MCF 10A (cell line): ENCODE measurements at regions of chr17 and their contacts with region 1.

Region 1: DNA sequence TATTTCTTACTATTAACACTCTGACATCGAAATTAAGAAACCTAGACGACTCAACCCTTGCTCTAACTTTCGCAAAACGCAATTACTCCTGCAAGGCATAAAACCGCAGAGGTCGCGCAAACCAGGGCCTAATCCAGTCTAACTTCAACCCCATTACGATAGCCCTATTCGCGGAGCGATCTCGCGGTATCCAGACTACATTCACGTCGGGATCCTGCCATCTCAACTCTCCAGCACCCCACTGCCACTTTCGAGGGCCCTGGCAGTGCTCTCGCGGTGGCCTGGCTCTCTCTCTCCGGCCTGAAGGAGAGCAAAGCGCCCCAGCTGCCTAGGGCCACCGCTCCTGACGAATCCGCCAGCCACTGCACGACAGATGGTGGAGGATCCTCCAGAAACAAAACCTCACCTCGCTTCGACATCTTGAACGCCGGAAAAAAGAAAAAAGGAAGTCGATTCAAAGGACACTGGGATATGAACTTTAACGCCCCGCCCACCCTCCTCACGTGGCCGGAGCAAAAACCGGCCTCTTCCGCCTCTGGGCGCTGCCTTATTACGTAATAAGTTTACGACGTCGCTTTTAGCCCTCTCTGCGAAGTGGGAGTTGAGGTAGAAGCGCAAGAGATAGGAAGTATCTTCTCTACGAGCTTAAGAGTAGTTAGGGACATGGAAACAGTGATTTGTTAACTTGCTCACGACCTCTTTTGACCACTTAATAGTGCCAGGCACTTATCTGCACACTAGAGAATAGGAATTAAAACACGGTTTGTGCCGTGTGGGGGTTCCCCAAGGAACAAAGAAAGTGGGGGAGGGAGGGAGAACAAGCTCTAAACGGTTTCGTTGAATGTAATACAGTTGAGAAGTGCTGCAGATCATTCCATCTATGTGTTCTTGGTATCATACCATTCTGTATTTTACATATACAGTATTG is at the start of gene RPL23:
- DNase-seq: peak; percentile 97
- H3K4me3 Mint-ChIP-seq: peak within 1 kb of the TSS; percentile 99
- H3K27ac Mint-ChIP-seq: peak within 1 kb of the TSS; percentile 100
- H3K4me1 Mint-ChIP-seq: peaks cover 15% of the 10 kb centered on the region
- H3K27me3 Mint-ChIP-seq: no peaks in the 10 kb centered on the region
- CTCF ChIP-seq: no peak
- total RNA-seq, gene RPL23: 1,891 and 2,060 TPM in 2 replicates

Region 2: GRCh38 chr17:38752119-38752929 is 101.2 kb before region 1 on chr17 and contains the start of gene PSMB3:
- CTCF ChIA-PET with region 1: no interaction called
- POLR2A ChIA-PET with region 1: interaction called, 21 read pairs
- intact Hi-C with region 1: no loop called
- DNase-seq: peak; percentile 99
- H3K4me3 Mint-ChIP-seq: peak within 1 kb of the TSS; percentile 96
- H3K27ac Mint-ChIP-seq: peak within 1 kb of the TSS; percentile 98
- H3K4me1 Mint-ChIP-seq: peaks cover 28% of the 10 kb centered on the region
- H3K27me3 Mint-ChIP-seq: no peaks in the 10 kb centered on the region
- CTCF ChIP-seq: no peak
- total RNA-seq, gene PSMB3: 124 and 145 TPM in 2 replicates

Region 3: DNA sequence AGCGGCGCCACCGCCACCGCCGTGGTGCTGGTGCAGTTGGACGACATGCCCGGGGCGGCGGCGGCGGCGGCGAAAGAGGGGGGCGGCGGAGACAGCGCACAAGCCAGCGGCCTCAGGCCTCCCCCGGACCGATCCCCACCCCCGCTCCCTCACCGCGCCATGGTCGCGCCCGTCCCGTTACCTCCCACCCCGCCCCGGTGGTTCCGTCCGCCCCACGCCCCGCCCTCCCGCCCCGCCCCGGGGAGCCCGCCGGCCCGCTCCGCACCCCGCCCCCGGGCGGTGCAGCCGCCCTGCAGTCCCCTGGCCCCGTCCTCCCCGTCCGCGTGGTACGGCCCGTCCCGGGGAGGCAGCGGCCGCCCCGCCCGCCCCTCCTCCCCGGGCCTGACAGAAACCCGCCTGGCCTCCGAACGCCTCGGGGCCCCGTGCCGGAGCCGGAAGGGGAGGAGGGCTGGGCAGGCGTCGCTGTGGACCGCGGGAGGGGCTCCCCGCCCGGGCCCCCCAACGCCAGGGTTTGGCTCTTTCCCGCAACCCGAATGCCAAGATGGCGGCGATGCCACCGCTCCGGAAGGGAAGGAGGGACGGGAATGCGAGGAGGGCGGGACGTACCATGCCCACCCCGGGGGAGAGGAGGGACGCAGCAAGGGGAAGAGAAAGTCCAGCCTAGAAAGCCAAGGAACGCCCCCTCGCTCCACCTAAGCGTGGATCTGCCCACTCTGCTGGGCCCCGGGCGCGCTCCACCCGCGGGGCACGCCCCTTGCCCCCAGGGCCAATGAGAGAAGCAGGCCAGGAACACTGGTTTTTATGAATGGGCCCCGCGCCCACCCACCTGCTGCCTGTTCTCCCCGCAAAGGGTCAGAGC is 53.9 kb before region 1 on chr17 and contains the start of gene PIP4K2B:
- CTCF ChIA-PET with region 1: no interaction called
- POLR2A ChIA-PET with region 1: interaction called, 19 read pairs
- intact Hi-C with region 1: no loop called
- DNase-seq: peak; percentile 96
- H3K4me3 Mint-ChIP-seq: peak within 1 kb of the TSS; percentile 98
- H3K27ac Mint-ChIP-seq: peak within 1 kb of the TSS; percentile 66
- H3K4me1 Mint-ChIP-seq: peaks cover 36% of the 10 kb centered on the region
- H3K27me3 Mint-ChIP-seq: no peaks in the 10 kb centered on the region
- CTCF ChIP-seq: no peak
- total RNA-seq, gene PIP4K2B: 25.9 and 27.4 TPM in 2 replicates

Region 4: GRCh38 chr17:38824899-38825761 is 28.4 kb before region 1 on chr17 and contains the start of gene CWC25:
- CTCF ChIA-PET with region 1: interaction called, 3 read pairs
- POLR2A ChIA-PET with region 1: interaction called, 72 read pairs
- intact Hi-C with region 1: no loop called
- DNase-seq: peak; percentile 92
- H3K4me3 Mint-ChIP-seq: peak within 1 kb of the TSS; percentile 98
- H3K27ac Mint-ChIP-seq: peak within 1 kb of the TSS; percentile 100
- H3K4me1 Mint-ChIP-seq: no peaks in the 10 kb centered on the region
- H3K27me3 Mint-ChIP-seq: no peaks in the 10 kb centered on the region
- CTCF ChIP-seq: no peak
- total RNA-seq, gene CWC25: 21.9 and 23.4 TPM in 2 replicates

Region 5: DNA sequence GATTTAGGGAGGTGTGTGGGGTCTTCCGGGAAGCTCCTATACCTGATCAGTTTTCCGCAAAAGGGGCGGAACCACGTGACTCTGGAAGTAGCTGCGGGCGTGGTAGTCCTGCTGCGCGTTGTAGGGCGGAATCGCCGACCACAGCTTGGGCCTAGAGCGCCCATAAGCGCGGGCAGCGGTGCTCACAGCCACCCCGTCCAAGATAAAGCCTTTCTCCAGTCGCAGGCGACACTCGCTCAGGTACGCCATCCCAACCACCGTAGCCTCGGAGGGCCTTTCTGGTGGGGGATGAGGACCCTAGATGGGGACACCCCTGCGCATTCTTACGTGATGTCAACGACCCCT is 12.4 kb before region 1 on chr17:
- CTCF ChIA-PET with region 1: no interaction called
- POLR2A ChIA-PET with region 1: interaction called, 41 read pairs
- intact Hi-C with region 1: no loop called
- DNase-seq: no peak
- H3K4me3 Mint-ChIP-seq: no peak overlapping the region
- H3K27ac Mint-ChIP-seq: no peak overlapping the region
- H3K4me1 Mint-ChIP-seq: peaks cover 5% of the 10 kb centered on the region
- H3K27me3 Mint-ChIP-seq: no peaks in the 10 kb centered on the region
- CTCF ChIP-seq: no peak

Region 6: GRCh38 chr17:38868817-38869525 is 15.4 kb after region 1 on chr17:
- CTCF ChIA-PET with region 1: interaction called, 3 read pairs
- POLR2A ChIA-PET with region 1: interaction called, 246 read pairs
- intact Hi-C with region 1: loop called (anchors 1 kb)
- DNase-seq: peak; percentile 87
- H3K4me3 Mint-ChIP-seq: peak overlapping the region; percentile 89
- H3K27ac Mint-ChIP-seq: peak overlapping the region; percentile 80
- H3K4me1 Mint-ChIP-seq: peaks cover 38% of the 10 kb centered on the region
- H3K27me3 Mint-ChIP-seq: no peaks in the 10 kb centered on the region
- CTCF ChIP-seq: no peak

Region 7: GRCh38 chr17:38898812-38899348 is 45.3 kb after region 1 on chr17:
- CTCF ChIA-PET with region 1: no interaction called
- POLR2A ChIA-PET with region 1: no interaction called
- intact Hi-C with region 1: no loop called
- DNase-seq: no peak
- H3K4me3 Mint-ChIP-seq: no peak overlapping the region
- H3K27ac Mint-ChIP-seq: no peak overlapping the region
- H3K4me1 Mint-ChIP-seq: peaks cover 8% of the 10 kb centered on the region
- H3K27me3 Mint-ChIP-seq: no peaks in the 10 kb centered on the region
- CTCF ChIP-seq: no peak

Region 8: GRCh38 chr17:39199820-39200069 is 346.2 kb after region 1 on chr17:
- CTCF ChIA-PET with region 1: no interaction called
- POLR2A ChIA-PET with region 1: interaction called, 11 read pairs
- intact Hi-C with region 1: no loop called
- DNase-seq: peak; percentile 95
- H3K4me3 Mint-ChIP-seq: peak overlapping the region; percentile 90
- H3K27ac Mint-ChIP-seq: peak overlapping the region; percentile 100
- H3K4me1 Mint-ChIP-seq: peaks cover 22% of the 10 kb centered on the region
- H3K27me3 Mint-ChIP-seq: no peaks in the 10 kb centered on the region
- CTCF ChIP-seq: no peak